CD4-positive, alpha-beta memory T cell (primary cell): ENCODE measurements at regions of chr19 and their contacts with region 1.

Region 1: GRCh38 chr19:1039646-1040475 is at the start of gene ABCA7:
- DNase-seq: peak; percentile 98 to 99 (median 98)
- H3K4me3 ChIP-seq: peak within 1 kb of the TSS; percentile 56 to 100
- H3K4me3 Mint-ChIP-seq: peak within 1 kb of the TSS; percentile 95 to 100 (median 97)
- H3K27ac ChIP-seq: peak within 1 kb of the TSS; percentile 75
- H3K27ac Mint-ChIP-seq: peak within 1 kb of the TSS; percentile 91 to 97 (median 95)
- H3K4me1 ChIP-seq: peaks cover 54% of the 10 kb centered on the region
- H3K4me1 Mint-ChIP-seq: peaks cover 27 to 69% (median 48%) of the 10 kb centered on the region in 4 donors
- H3K27me3 ChIP-seq: no peaks in the 10 kb centered on the region
- H3K27me3 Mint-ChIP-seq: no peaks in the 10 kb centered on the region
- total RNA-seq, gene ABCA7: 313 to 319 TPM

Region 2: DNA sequence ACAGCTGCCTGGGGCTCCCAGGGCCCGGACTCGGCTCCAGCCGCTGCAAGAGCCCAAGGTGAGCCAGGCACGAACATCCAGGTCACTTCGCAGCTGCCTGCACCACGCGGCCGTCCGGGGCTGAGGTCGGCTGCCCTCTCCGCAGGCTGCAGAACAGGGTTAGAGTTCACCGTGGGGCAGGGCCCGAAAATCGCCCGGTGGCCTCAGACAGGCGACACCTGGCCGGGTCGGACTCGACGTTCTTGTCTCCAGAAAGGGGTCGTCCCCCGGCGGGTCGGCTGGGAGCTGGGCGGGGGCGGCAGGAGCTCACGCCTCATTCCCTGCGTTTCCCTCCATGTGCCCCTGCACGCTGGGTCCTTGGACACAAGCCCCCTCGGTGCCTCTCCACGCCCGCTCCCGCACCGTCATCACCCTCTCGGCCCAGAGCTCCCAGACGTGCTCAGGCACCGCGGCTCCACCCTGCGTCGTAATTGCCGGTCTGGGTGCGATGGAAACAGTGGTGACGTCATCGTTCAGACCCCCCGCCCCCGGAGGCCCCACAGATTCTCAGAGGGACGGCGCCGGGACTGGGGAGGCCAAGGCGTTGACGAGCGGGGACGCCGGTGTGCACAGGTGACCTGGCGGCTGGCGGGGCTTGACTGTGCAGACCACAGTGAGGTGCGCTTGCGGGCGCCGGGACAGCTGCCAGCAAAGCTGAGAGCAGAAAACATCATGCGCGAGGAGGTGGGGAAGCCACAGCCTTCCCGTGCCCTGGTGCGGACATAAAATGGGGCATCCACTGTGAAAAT is 43.6 kb before region 1 on chr19:
- CTCF ChIA-PET with region 1: no interaction called
- POLR2A ChIA-PET with region 1: interaction called, 12 read pairs
- intact Hi-C with region 1: loop called (anchors 2 kb)
- DNase-seq: peak; percentile 78 to 96 (median 84)
- H3K4me3 ChIP-seq: peak overlapping the region in 1 of 2 donors; percentile 38
- H3K4me3 Mint-ChIP-seq: peak overlapping the region; percentile 55 to 88 (median 74)
- H3K27ac ChIP-seq: peak overlapping the region; percentile 37
- H3K27ac Mint-ChIP-seq: peak overlapping the region; percentile 81 to 99 (median 88)
- H3K4me1 ChIP-seq: peaks cover 21% of the 10 kb centered on the region
- H3K4me1 Mint-ChIP-seq: peaks cover 4 to 26% (median 14%) of the 10 kb centered on the region in 4 donors
- H3K27me3 ChIP-seq: peaks cover 23% of the 10 kb centered on the region
- H3K27me3 Mint-ChIP-seq: peaks cover 16 to 22% of the 10 kb centered on the region in 2 donors

Region 3: GRCh38 chr19:1020868-1021425 is 18.9 kb before region 1 on chr19 and contains the start of gene TMEM259:
- CTCF ChIA-PET with region 1: interaction called, 4 read pairs
- POLR2A ChIA-PET with region 1: interaction called, 562 read pairs
- intact Hi-C with region 1: loop called (anchors 1 kb)
- DNase-seq: peak; percentile 98 to 99 (median 98)
- H3K4me3 ChIP-seq: peak within 1 kb of the TSS; percentile 66 to 69
- H3K4me3 Mint-ChIP-seq: peak within 1 kb of the TSS; percentile 86 to 92 (median 89)
- H3K27ac ChIP-seq: peak within 1 kb of the TSS; percentile 95
- H3K27ac Mint-ChIP-seq: peak within 1 kb of the TSS; percentile 97 to 100 (median 100)
- H3K4me1 ChIP-seq: peaks cover 54% of the 10 kb centered on the region
- H3K4me1 Mint-ChIP-seq: peaks cover 19 to 62% (median 39%) of the 10 kb centered on the region in 4 donors
- H3K27me3 ChIP-seq: no peaks in the 10 kb centered on the region
- H3K27me3 Mint-ChIP-seq: peaks cover 0 to 6% of the 10 kb centered on the region in 2 donors
- total RNA-seq, gene TMEM259: 315 to 329 TPM

Region 4: GRCh38 chr19:1057176-1057855 is 17.5 kb after region 1 on chr19:
- CTCF ChIA-PET with region 1: interaction called, 16 read pairs
- POLR2A ChIA-PET with region 1: interaction called, 3,893 read pairs
- intact Hi-C with region 1: no loop called
- DNase-seq: peak in 4 of 5 donors; percentile 59 to 63 (median 62)
- H3K4me3 ChIP-seq: no peak overlapping the region
- H3K4me3 Mint-ChIP-seq: peak overlapping the region in 5 of 8 donors; percentile 25 to 74 (median 73)
- H3K27ac ChIP-seq: no peak overlapping the region
- H3K27ac Mint-ChIP-seq: peak overlapping the region; percentile 72 to 97 (median 91)
- H3K4me1 ChIP-seq: peaks cover 23% of the 10 kb centered on the region
- H3K4me1 Mint-ChIP-seq: peaks cover 16 to 31% (median 26%) of the 10 kb centered on the region in 4 donors
- H3K27me3 ChIP-seq: no peaks in the 10 kb centered on the region
- H3K27me3 Mint-ChIP-seq: no peaks in the 10 kb centered on the region

Region 5: DNA sequence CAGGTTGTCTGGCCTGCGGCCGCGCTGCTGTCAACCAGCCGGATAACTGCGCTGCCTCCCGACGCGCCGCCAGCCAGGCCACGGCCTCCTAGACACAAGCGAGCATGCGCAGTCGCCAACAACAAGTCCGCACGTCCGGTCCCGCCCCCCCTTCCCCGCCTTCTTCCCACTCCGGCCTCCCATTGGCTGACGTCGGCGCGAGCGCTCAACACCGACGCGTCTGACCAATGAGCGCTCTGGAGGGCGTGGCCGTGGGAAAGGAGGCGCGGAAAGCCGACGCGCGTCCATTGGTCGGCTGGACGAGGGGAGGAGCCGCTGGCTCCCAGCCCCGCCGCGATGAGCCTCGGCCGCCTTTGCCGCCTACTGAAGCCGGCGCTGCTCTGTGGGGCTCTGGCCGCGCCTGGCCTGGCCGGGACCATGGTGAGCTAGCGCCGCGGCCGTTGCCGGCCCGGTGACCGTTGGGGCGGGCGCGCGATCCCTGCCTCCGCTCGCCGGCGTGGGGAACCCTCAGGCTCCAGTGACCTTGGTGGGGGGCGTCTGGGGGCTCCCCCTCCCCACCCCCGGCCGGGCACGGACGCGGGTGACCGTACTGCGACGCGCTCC is 63.9 kb after region 1 on chr19 and contains the start of gene GPX4:
- CTCF ChIA-PET with region 1: no interaction called
- POLR2A ChIA-PET with region 1: interaction called, 3,893 read pairs
- intact Hi-C with region 1: no loop called
- DNase-seq: peak; percentile 94 to 98 (median 97)
- H3K4me3 ChIP-seq: peak within 1 kb of the TSS; percentile 47 to 76
- H3K4me3 Mint-ChIP-seq: peak within 1 kb of the TSS; percentile 73 to 86 (median 77)
- H3K27ac ChIP-seq: peak within 1 kb of the TSS; percentile 96
- H3K27ac Mint-ChIP-seq: peak within 1 kb of the TSS; percentile 92 to 97 (median 96)
- H3K4me1 ChIP-seq: peaks cover 43% of the 10 kb centered on the region
- H3K4me1 Mint-ChIP-seq: peaks cover 14 to 51% (median 33%) of the 10 kb centered on the region in 4 donors
- H3K27me3 ChIP-seq: no peaks in the 10 kb centered on the region
- H3K27me3 Mint-ChIP-seq: no peaks in the 10 kb centered on the region
- total RNA-seq, gene GPX4: 210 to 220 TPM